ENCODE measurements at regions of chr6 and their contacts with region 1.

Region 1: DNA sequence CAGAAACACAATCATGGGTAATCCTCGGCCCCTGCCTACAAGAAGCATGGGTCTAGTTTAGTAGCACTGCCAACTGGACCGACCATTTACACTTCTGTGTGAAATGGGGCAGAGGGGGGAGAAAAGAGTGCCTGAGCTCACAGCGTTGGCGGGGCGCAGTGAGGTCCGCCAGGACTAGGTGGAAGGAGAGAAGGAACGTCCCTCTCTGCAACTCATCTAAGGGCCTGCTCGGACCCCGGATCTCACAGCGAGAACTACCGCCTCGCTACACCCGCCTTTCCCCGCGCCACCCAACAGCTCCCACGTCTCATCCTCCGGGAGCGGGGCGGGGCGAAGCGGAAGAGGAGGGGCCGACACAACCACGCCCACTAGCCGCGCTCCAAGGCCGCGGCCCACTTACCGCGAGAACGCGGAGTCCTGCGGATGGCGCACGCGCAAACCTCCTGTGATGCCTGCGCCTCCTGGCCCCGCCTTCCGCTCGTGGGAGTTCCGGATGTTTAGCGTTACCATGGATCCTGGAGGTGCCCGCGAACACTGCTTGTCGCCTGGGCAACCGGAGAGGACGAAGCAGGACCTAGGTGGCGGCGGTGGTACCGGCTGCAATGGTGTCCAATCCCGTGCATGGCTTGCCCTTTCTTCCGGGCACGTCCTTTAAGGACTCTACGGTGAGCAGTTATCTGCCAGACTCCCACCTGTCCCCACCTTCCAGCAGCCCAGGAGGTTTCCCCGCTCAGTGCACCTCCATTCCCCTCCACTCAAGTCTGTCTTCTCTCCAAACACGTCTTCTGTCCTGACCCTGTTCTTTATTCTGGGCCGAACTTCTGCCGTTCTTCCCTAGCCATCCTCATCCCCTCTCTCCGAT is at the start of gene EFHC1:
- DNase-seq: peak; percentile 96 to 99
- H3K4me3 ChIP-seq: peak within 1 kb of the TSS; percentile 71 to 95
- H3K27ac ChIP-seq: peak within 1 kb of the TSS; percentile 82 to 84
- H3K4me1 ChIP-seq: peaks cover 2 to 7% of the 10 kb centered on the region in 2 donors
- H3K27me3 ChIP-seq: no peaks in the 10 kb centered on the region
- CTCF ChIP-seq: no peak
- total RNA-seq, gene EFHC1: 7.3 TPM

Region 2: GRCh38 chr6:52361945-52362442 is 58.0 kb before region 1 on chr6 and contains the start of gene PAQR8:
- intact Hi-C with region 1: loop called (anchors 2 kb)
- DNase-seq: peak; percentile 24 to 83
- H3K4me3 ChIP-seq: peak within 1 kb of the TSS; percentile 87 to 90
- H3K27ac ChIP-seq: peak within 1 kb of the TSS; percentile 36 to 54
- H3K4me1 ChIP-seq: peaks cover 0 to 3% of the 10 kb centered on the region in 2 donors
- H3K27me3 ChIP-seq: no peaks in the 10 kb centered on the region
- CTCF ChIP-seq: peak in 1 of 3 experiments; percentile 1
- total RNA-seq, gene PAQR8: 6.1 TPM

Region 3: DNA sequence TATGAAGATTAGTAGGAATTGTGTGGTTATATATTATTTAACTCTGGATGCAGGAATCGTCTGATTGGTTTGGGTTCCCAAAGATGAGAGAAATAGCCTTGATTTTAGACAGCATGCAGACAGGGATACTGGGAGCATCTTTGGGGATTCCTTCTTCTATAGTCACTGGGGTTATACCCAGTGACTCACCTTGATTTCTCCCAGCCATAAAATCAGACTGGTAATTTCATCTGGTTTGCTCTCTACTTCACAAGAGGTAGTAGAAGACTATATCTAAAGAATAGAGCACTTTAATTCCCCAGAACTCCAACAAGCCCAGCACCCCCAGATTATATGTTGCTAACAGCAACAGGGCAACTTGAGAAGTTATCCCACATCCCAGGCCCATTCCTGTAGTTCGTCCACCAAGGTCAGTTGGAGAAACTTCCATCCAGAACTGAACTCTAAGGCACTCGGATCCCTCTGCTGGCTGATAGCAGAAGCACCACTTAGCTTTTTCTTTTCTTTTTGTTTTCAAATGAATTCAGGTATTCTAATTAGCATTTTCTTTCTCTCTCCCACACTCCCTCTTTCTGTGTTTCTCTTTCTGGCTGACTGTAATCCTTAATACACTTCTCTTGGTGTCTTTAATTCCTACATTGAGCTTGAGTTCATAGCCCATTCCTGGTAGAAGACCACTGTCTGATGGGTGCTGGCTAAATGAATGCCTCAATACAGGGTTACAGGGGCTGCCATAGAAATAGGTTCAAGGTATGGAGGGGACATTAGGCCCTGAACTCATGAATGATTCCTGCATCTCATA is 20.3 kb before region 1 on chr6:
- intact Hi-C with region 1: no loop called
- DNase-seq: no peak
- H3K4me3 ChIP-seq: no peak overlapping the region
- H3K27ac ChIP-seq: no peak overlapping the region
- H3K4me1 ChIP-seq: no peaks in the 10 kb centered on the region
- H3K27me3 ChIP-seq: no peaks in the 10 kb centered on the region
- CTCF ChIP-seq: peak; percentile 58 to 79 (median 75)

Region 4: GRCh38 chr6:52598123-52598823 is 178.2 kb after region 1 on chr6:
- intact Hi-C with region 1: loop called (anchors 1 kb)
- DNase-seq: peak in 1 of 2 donors; percentile 85
- H3K4me3 ChIP-seq: peak overlapping the region in 1 of 2 donors; percentile 46
- H3K27ac ChIP-seq: peak overlapping the region; percentile 64 to 78
- H3K4me1 ChIP-seq: peaks cover 16 to 33% of the 10 kb centered on the region in 2 donors
- H3K27me3 ChIP-seq: no peaks in the 10 kb centered on the region
- CTCF ChIP-seq: peak; percentile 64 to 79 (median 69)

Region 5: GRCh38 chr6:52724406-52725121 is 304.5 kb after region 1 on chr6:
- intact Hi-C with region 1: loop called (anchors 5 kb)
- DNase-seq: peak; percentile 61 to 89
- H3K4me3 ChIP-seq: no peak overlapping the region
- H3K27ac ChIP-seq: peak overlapping the region; percentile 71 to 91
- H3K4me1 ChIP-seq: peaks cover 2 to 9% of the 10 kb centered on the region in 2 donors
- H3K27me3 ChIP-seq: no peaks in the 10 kb centered on the region
- CTCF ChIP-seq: peak in 2 of 3 experiments; percentile 43 to 48

Region 6: DNA sequence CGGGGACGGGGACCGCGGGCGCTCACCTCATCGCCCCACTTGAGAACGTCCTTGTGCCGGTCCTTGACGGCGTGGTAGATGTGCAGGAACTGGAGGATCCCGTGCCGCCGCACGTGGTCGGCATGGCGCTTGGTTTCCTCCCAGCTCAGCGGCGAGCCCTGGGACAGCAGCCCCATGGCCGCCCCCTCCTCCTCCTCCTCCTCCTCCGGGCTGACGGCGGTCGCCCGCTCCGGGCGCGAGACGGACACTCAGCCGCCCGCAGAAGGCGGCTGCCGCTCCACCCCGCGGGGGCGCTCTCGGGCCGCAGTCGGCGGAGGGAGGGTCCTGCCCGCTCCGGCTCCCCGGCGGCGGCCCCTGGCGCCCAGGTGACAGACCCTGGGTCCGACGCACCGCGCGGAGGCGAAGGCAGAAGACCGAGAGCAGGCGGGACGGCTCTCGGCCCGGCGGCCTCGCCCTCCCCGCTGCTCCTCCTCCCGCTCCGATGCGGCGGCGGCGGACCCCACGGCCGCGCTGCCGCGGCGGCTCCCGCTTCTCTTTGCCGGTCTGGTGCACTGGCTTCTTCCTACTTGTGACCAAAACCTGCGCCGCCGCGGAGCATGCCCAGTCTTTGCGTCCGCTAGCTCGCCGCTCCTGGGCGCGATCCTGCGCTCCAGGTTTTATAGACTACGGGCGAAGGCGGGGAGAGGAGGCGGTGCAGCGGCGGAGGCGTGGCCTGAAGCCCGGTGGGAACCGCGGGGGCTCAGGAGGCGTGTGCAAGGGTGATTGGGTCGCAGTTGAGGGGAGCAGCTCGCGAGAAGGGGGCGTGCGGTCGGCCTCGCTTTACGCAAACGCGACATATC is 1124.6 kb after region 1 on chr6 and contains the start of gene GCLC:
- intact Hi-C with region 1: loop called (anchors 5 kb)
- DNase-seq: peak; percentile 79 to 97
- H3K4me3 ChIP-seq: peak within 1 kb of the TSS; percentile 81 to 96
- H3K27ac ChIP-seq: peak within 1 kb of the TSS; percentile 89 to 93
- H3K4me1 ChIP-seq: peaks cover 0 to 14% of the 10 kb centered on the region in 2 donors
- H3K27me3 ChIP-seq: no peaks in the 10 kb centered on the region
- CTCF ChIP-seq: peak in 2 of 3 experiments; percentile 60 to 72
- total RNA-seq, gene GCLC: 54.9 TPM